ENCODE measurements at regions of chr2 and their contacts with region 1.

Region 1: DNA sequence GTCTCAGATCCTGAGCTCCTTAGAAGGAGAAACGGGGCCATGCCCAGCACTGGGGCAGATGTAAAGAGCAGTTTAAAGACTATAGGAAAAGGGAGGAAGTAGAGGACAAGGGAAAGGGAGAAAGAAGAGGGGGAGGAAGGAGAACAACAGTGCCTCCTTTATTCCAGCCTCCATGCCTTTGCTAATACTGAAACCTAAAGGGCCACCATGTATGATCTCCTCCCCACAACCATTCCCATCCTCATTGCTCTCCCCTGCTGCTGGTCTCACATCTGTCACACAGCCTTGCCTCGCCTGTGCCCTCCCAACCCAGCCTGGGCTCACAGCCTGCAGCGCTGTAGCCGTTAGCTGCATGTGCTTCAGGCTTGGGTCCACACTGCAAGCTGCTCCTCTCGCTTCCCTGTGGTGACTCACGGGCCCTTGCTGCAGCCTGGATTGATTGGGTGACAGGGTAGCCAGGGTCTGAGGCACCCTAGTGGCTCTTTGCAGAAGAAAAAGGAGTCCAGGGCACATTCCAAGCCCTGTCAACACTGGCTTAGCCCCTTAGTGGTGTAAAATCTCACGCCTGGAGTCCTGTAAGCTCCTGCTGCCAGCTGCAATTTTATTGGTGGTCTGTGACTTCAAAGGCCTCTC is 281.9 kb downstream of the SRBD1 start:
- DNase-seq: peak; percentile 53
- ATAC-seq: peak; percentile 35; the same call in 1 of the 2 replicates
- H3K4me3 ChIP-seq: no peak overlapping the region
- H3K27ac ChIP-seq: peak overlapping the region; percentile 94
- H3K4me1 ChIP-seq: peaks cover 30% of the 10 kb centered on the region
- H3K27me3 ChIP-seq: no peaks in the 10 kb centered on the region
- CTCF ChIP-seq: peak; percentile 35; the same call in 1 of the 2 replicates

Region 2: DNA sequence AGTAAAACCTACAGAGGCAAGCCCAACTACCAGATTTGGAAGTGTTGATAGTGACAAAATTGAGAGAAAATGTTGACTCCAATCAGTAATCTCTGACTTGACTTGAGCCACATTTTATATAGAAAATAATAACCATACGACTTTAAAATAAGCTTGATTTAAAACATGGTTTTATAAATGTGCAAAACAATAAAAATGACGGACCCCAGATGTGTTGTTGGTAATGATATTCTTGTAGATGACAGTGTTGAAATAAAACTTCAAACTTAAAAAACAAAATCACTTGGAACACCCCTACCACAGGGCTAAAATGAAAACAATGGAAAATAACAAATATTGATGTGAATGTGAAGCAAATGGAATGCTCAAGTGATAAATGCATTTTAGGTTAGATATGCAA is 93.8 kb after region 1 on chr2:
- CTCF ChIA-PET with region 1: no interaction called
- POLR2A ChIA-PET with region 1: no interaction called
- intact Hi-C with region 1: loop called (anchors 5 kb)
- DNase-seq: no peak
- ATAC-seq: no peak
- H3K4me3 ChIP-seq: no peak overlapping the region
- H3K27ac ChIP-seq: no peak overlapping the region
- H3K4me1 ChIP-seq: no peaks in the 10 kb centered on the region
- H3K27me3 ChIP-seq: no peaks in the 10 kb centered on the region
- CTCF ChIP-seq: no peak

Region 3: GRCh38 chr2:45650851-45651414 is 321.8 kb after region 1 on chr2:
- CTCF ChIA-PET with region 1: no interaction called
- POLR2A ChIA-PET with region 1: no interaction called
- intact Hi-C with region 1: no loop called
- DNase-seq: peak; percentile 95
- ATAC-seq: peak; percentile 74
- H3K4me3 ChIP-seq: peak overlapping the region; percentile 100
- H3K27ac ChIP-seq: peak overlapping the region; percentile 47
- H3K4me1 ChIP-seq: peaks cover 18% of the 10 kb centered on the region
- H3K27me3 ChIP-seq: no peaks in the 10 kb centered on the region
- CTCF ChIP-seq: peak; percentile 54

Measured in PC-3 (cell line).